Natural killer cell (primary cell): ENCODE measurements at regions of chr3 and their contacts with region 1.

Region 1: DNA sequence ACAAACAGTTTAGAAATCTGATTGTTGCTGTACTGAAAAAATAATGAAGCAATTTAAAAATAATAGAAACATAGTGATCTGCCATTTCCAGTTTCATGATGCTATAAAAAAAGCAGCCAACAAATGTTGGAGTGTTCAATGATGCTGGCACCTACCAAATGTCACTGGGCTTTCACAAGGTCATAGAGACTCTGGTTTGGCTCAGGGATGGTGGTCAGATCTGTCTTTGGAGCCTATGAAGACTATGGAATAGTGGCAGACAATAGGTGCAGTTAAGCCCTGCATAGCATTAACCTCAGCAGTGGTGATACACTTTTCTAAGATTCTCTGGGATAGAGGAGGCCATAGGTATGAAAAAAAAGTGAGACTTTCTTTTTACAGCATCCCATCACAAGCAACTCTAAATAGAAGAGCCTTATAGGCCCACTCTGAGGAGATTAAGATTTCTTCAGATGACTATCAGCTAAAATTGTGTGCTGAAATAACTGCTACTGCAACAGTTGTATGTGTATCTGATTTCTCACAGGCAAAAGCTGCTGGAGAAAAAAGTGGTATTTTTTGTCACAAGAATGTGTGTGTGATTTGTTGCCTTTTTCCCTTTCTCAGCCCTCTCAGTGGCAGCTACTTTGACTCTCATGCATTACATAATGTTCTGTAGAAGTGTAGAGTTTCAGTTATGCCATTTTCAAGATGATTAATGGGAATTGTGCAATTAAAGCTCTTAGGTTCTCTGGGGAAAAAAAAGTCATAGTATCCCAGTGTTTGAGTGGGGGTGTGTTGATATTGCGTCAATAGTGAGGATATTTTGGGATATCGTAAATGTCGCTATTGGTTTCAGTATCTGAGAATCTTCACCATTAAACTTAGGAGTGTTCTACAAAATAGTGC is 137.4 kb downstream of the MBNL1 start:
- DNase-seq: no peak
- ATAC-seq: no peak
- H3K4me3 ChIP-seq: no peak overlapping the region
- H3K4me3 Mint-ChIP-seq: no peak overlapping the region
- H3K27ac ChIP-seq: no peak overlapping the region
- H3K27ac Mint-ChIP-seq: peak overlapping the region; percentile 83 to 91
- H3K4me1 ChIP-seq: peaks cover 22% of the 10 kb centered on the region
- H3K4me1 Mint-ChIP-seq: peaks cover 64 to 71% of the 10 kb centered on the region in 2 donors
- H3K27me3 ChIP-seq: no peaks in the 10 kb centered on the region
- H3K27me3 Mint-ChIP-seq: no peaks in the 10 kb centered on the region
- CTCF ChIP-seq: no peak

Region 2: GRCh38 chr3:152258448-152259393 is 147.4 kb before region 1 on chr3:
- intact Hi-C with region 1: no loop called
- DNase-seq: peak; percentile 62 to 78
- ATAC-seq: peak; percentile 62 to 81 (median 79)
- H3K4me3 ChIP-seq: no peak overlapping the region
- H3K4me3 Mint-ChIP-seq: peak overlapping the region; percentile 73
- H3K27ac ChIP-seq: peak overlapping the region; percentile 94
- H3K27ac Mint-ChIP-seq: peak overlapping the region; percentile 79 to 96
- H3K4me1 ChIP-seq: peaks cover 43% of the 10 kb centered on the region
- H3K4me1 Mint-ChIP-seq: peaks cover 83 to 84% of the 10 kb centered on the region in 2 donors
- H3K27me3 ChIP-seq: no peaks in the 10 kb centered on the region
- H3K27me3 Mint-ChIP-seq: no peaks in the 10 kb centered on the region
- CTCF ChIP-seq: no peak

Region 3: GRCh38 chr3:152268555-152269425 is 137.4 kb before region 1 on chr3 and contains the start of gene MBNL1:
- intact Hi-C with region 1: loop called (anchors 10 kb)
- DNase-seq: peak; percentile 82 to 94
- ATAC-seq: peak; percentile 61 to 85 (median 75)
- H3K4me3 ChIP-seq: peak within 1 kb of the TSS; percentile 93
- H3K4me3 Mint-ChIP-seq: peak within 1 kb of the TSS; percentile 97
- H3K27ac ChIP-seq: peak within 1 kb of the TSS; percentile 93
- H3K27ac Mint-ChIP-seq: peak within 1 kb of the TSS; percentile 81 to 84
- H3K4me1 ChIP-seq: peaks cover 22% of the 10 kb centered on the region
- H3K4me1 Mint-ChIP-seq: peaks cover 62 to 77% of the 10 kb centered on the region in 2 donors
- H3K27me3 ChIP-seq: no peaks in the 10 kb centered on the region
- H3K27me3 Mint-ChIP-seq: no peaks in the 10 kb centered on the region
- CTCF ChIP-seq: no peak
- total RNA-seq, gene MBNL1: 600 to 704 (median 607) TPM

Region 4: DNA sequence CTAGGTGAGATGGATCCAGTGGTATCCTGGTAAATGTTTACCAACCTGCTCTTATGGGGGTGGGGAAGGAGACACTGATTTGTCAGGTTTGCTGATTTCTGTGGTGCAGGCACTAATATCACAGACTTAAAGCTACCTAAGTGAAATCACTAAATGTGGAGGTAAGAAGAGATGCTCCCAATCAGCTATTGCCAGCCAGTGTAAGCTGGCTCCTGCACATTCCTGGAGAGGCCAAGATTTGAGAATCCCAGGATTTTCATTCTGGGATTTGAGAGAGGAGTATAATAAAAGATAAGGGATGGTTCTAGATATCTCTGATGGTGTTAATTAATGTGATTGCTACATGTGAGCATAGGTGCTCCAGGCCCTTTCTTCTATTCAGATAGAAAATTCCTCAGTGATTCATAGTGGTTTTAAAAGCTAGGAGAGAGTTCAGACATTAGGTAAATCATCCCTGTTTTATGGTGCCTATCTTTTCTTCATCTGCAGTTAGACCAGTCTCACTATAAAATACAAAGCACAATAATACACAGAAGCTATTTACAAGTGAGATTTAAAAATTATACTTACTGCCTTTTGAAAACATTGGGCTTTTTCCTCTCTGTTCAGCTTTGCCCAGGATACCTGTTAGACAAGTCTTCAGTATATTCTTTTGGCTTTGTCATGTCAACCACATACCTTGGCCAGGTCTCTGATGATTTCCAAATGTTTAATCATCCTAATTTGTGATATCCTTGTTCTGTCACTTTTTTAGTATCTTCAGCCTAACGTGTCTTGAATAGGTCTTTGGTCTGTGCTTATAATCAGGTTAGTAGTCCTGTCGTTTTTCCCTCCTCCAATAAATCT is 46.5 kb before region 1 on chr3:
- intact Hi-C with region 1: loop called (anchors 5 kb)
- DNase-seq: no peak
- ATAC-seq: no peak
- H3K4me3 ChIP-seq: no peak overlapping the region
- H3K4me3 Mint-ChIP-seq: no peak overlapping the region
- H3K27ac ChIP-seq: no peak overlapping the region
- H3K27ac Mint-ChIP-seq: peak overlapping the region; percentile 63 to 79
- H3K4me1 ChIP-seq: peaks cover 12% of the 10 kb centered on the region
- H3K4me1 Mint-ChIP-seq: peaks cover 75 to 78% of the 10 kb centered on the region in 2 donors
- H3K27me3 ChIP-seq: no peaks in the 10 kb centered on the region
- H3K27me3 Mint-ChIP-seq: no peaks in the 10 kb centered on the region
- CTCF ChIP-seq: no peak

Region 5: DNA sequence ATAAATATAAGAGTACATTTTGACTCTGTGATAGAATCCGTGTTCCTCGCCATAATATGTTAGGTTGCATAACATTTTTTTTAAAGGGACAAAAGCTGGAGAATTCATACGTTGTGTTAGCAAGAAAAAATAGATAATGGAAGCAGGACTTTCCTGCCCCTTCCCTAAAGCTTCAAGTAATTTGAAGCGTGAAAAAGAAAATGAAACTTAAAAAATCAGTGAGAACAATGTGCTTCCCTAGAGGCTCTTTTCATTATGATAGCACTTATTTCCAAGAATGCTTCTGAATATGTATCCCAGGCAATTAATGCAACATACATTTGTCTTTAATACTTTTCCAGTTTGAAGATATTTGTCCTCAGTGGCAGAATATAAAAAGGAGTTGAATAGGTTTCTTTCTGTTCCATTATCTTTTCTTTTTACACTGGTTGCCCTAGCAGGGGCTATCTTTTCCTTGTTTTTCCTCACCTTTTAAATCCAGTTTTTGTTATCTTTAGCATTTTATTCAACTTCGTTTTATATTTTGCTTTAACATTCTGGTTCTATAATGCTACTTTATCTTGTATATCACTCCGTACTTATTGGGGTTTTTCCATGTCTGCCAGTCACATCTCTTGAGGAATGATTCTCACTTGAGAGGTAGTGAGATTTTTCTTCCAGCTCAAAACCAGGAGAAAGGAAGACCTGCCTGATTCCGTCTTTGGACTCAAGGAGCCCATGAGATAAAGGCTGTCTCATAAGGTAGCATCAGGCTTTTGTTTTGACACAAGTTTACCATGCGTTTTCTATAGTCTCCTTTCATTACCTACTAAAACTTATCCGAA is 23.6 kb before region 1 on chr3:
- intact Hi-C with region 1: loop called (anchors 2 kb)
- DNase-seq: peak in 1 of 2 donors; percentile 33
- ATAC-seq: peak; percentile 48 to 50 (median 49)
- H3K4me3 ChIP-seq: peak overlapping the region; percentile 3
- H3K4me3 Mint-ChIP-seq: peak overlapping the region; percentile 74
- H3K27ac ChIP-seq: peak overlapping the region; percentile 43
- H3K27ac Mint-ChIP-seq: peak overlapping the region; percentile 88 to 89
- H3K4me1 ChIP-seq: peaks cover 8% of the 10 kb centered on the region
- H3K4me1 Mint-ChIP-seq: peaks cover 55 to 72% of the 10 kb centered on the region in 2 donors
- H3K27me3 ChIP-seq: no peaks in the 10 kb centered on the region
- H3K27me3 Mint-ChIP-seq: no peaks in the 10 kb centered on the region
- CTCF ChIP-seq: no peak

Region 6: DNA sequence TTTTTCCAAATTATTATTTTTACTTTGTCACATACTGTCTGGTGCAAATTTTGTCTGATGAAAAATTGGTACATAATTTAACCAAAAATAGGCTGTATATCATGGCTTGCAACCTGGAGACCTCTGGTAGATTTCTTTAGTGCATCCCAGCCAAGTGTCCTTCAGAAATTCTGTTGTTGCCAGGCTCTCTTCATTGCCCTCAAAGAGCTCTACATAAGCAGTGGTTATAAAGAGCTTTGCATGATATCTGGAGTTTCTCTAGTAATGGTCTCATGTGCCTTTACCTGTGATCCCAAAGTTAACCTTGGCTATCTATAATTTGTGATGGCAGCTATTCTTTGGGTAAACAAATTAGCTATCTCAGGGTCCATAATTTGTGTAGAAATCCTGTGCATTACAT is 20.2 kb after region 1 on chr3:
- intact Hi-C with region 1: no loop called
- DNase-seq: no peak
- ATAC-seq: no peak
- H3K4me3 ChIP-seq: no peak overlapping the region
- H3K4me3 Mint-ChIP-seq: no peak overlapping the region
- H3K27ac ChIP-seq: no peak overlapping the region
- H3K27ac Mint-ChIP-seq: peak overlapping the region; percentile 85 to 94
- H3K4me1 ChIP-seq: peaks cover 8% of the 10 kb centered on the region
- H3K4me1 Mint-ChIP-seq: peaks cover 84 to 85% of the 10 kb centered on the region in 2 donors
- H3K27me3 ChIP-seq: no peaks in the 10 kb centered on the region
- H3K27me3 Mint-ChIP-seq: no peaks in the 10 kb centered on the region
- CTCF ChIP-seq: no peak

Region 7: DNA sequence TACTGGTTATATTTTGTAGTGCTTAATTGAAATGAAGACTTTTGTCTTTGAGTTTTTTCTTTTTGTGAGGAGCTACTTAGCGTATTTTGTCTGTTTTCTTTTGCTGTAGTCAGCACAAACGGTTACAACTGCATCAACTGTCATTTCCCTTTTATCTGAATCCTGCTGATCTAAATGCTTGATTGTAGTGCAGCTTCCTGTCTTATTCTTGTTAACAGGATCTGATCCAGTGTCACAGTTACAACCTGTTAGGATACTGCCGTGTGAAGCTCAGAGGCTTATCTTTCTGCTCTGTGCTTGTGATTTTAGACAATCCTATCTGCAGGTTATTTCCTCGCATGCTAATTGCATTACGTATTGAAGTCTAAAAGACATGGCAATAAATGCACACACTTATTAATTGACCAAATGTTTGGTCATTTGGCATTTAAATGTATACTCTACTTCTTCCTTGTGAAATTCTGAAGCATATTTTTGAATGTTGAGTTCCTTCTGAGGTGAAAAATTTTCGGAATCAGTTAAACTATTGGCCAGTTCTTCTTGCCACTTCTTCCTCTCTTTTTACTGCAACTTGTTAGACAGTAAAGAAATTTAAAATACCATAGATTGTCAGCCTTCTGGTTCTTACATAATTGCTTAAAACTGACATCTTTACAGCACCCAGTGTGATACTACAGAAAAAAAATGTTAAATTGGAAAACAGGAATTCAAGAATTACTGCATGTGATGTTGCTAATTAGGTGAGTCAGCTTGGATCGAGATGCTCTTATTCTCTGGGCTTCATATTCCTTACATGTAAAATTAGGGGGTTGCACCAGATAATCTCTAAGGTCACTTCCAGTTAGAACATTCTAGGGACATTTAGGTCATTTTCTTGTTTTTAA is 30.8 kb after region 1 on chr3:
- intact Hi-C with region 1: loop called (anchors 5 kb)
- DNase-seq: peak in 1 of 2 donors; percentile 22
- ATAC-seq: no peak
- H3K4me3 ChIP-seq: no peak overlapping the region
- H3K4me3 Mint-ChIP-seq: peak overlapping the region; percentile 60
- H3K27ac ChIP-seq: no peak overlapping the region
- H3K27ac Mint-ChIP-seq: peak overlapping the region; percentile 79 to 85
- H3K4me1 ChIP-seq: peaks cover 9% of the 10 kb centered on the region
- H3K4me1 Mint-ChIP-seq: peaks cover 62 to 69% of the 10 kb centered on the region in 2 donors
- H3K27me3 ChIP-seq: no peaks in the 10 kb centered on the region
- H3K27me3 Mint-ChIP-seq: no peaks in the 10 kb centered on the region
- CTCF ChIP-seq: no peak